ENCODE measurements at regions of chr3 and their contacts with region 1.

Region 1: DNA sequence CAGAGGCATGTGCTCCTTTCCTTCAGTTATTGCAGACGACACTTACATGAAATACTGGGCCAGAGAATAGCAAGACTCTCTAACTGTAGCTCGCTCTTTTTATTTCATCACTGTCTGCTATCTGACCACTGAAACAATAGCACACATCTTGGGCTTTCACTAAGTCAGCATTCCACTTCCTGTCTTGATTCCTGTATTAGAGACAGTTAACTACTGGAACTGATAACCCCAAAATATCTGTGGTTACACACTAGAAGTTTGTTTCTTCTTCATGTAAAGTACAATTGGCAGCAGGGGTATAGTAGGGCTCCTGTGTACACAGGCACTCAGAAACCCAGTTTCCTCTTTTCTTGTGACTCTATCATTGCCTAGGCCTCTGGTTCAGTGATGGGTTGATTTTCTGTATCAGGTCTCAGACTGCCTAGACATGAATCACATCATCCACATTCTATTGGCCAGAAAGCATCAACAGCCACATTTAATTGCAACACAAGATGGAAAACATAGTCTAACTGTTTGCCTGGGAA is 230.2 kb upstream of the CD96 start:
- DNase-seq: peak; percentile 75
- H3K4me3 Mint-ChIP-seq: peak overlapping the region; percentile 40
- H3K27ac Mint-ChIP-seq: peak overlapping the region; percentile 86
- H3K4me1 Mint-ChIP-seq: peaks cover 45% of the 10 kb centered on the region
- H3K27me3 Mint-ChIP-seq: no peaks in the 10 kb centered on the region

Region 2: GRCh38 chr3:111260878-111261277 is 50.9 kb before region 1 on chr3:
- intact Hi-C with region 1: loop called (anchors 2 kb)
- DNase-seq: no peak
- H3K4me3 Mint-ChIP-seq: no peak overlapping the region
- H3K27ac Mint-ChIP-seq: peak overlapping the region; percentile 31
- H3K4me1 Mint-ChIP-seq: peaks cover 19% of the 10 kb centered on the region
- H3K27me3 Mint-ChIP-seq: peaks cover 23% of the 10 kb centered on the region

Region 3: DNA sequence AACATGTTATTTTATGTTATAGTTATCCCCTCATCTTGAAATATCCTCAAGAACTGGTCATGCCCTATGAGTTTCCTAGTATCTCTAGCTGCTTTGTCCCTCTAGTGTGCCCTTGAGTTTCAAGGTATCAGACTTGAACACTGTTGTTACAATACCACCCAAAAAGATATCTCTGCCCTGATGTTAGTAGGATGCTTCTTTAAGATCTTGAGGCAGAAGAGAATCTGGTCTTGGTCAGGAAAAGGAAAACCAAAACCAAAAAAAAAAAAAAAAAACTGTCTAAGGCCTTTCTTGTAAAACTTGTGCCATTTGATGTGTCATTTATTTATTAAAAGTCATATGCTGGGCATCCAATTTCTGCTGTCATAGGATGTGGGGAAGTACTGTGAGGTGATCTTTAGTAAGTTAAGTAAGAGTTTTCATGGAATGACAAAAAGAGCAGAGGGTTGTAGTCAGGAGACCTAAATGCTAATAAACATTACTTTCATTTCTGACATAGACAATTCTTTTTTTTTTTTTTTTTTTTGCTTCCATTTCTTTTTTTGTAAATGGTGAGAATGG is 10.5 kb before region 1 on chr3:
- intact Hi-C with region 1: loop called (anchors 1 kb)
- DNase-seq: no peak
- H3K4me3 Mint-ChIP-seq: peak overlapping the region; percentile 12
- H3K27ac Mint-ChIP-seq: peak overlapping the region; percentile 4
- H3K4me1 Mint-ChIP-seq: peaks cover 46% of the 10 kb centered on the region
- H3K27me3 Mint-ChIP-seq: no peaks in the 10 kb centered on the region

Region 4: GRCh38 chr3:111326144-111326995 is 14.6 kb after region 1 on chr3:
- intact Hi-C with region 1: loop called (anchors 1 kb)
- DNase-seq: no peak
- H3K4me3 Mint-ChIP-seq: peak overlapping the region; percentile 3
- H3K27ac Mint-ChIP-seq: peak overlapping the region; percentile 67
- H3K4me1 Mint-ChIP-seq: peaks cover 29% of the 10 kb centered on the region
- H3K27me3 Mint-ChIP-seq: no peaks in the 10 kb centered on the region

Region 5: GRCh38 chr3:111338059-111338698 is 26.4 kb after region 1 on chr3:
- intact Hi-C with region 1: loop called (anchors 1 kb)
- DNase-seq: peak; percentile 84
- H3K4me3 Mint-ChIP-seq: no peak overlapping the region
- H3K27ac Mint-ChIP-seq: no peak overlapping the region
- H3K4me1 Mint-ChIP-seq: peaks cover 24% of the 10 kb centered on the region
- H3K27me3 Mint-ChIP-seq: peaks cover 2% of the 10 kb centered on the region

Region 6: GRCh38 chr3:111434941-111435622 is 123.3 kb after region 1 on chr3:
- intact Hi-C with region 1: no loop called
- DNase-seq: no peak
- H3K4me3 Mint-ChIP-seq: no peak overlapping the region
- H3K27ac Mint-ChIP-seq: no peak overlapping the region
- H3K4me1 Mint-ChIP-seq: no peaks in the 10 kb centered on the region
- H3K27me3 Mint-ChIP-seq: no peaks in the 10 kb centered on the region

Region 7: GRCh38 chr3:111668912-111669488 is 357.2 kb after region 1 on chr3:
- intact Hi-C with region 1: loop called (anchors 5 kb)
- DNase-seq: peak; percentile 69
- H3K4me3 Mint-ChIP-seq: peak overlapping the region; percentile 22
- H3K27ac Mint-ChIP-seq: peak overlapping the region; percentile 73
- H3K4me1 Mint-ChIP-seq: peaks cover 69% of the 10 kb centered on the region
- H3K27me3 Mint-ChIP-seq: no peaks in the 10 kb centered on the region

Region 8: DNA sequence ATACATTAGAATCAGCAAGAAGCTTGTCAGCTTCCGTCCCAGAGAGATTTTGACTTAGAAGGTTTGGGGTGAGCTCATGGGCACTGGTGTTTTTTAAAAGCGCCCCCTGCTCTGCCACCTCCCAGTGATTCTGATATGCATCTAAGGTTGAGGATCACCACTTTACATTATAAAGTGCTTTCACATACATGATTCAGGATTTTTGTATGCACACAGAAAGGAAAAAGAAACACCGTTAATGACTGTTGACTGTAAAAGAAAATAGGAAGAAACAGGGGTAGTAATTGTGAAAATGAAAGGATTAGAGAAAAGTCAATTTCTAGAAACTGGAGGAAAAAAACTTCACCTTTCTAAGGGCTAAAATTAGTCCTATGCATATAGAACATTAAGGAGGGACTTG is 388.3 kb after region 1 on chr3:
- intact Hi-C with region 1: loop called (anchors 5 kb)
- DNase-seq: peak; percentile 69
- H3K4me3 Mint-ChIP-seq: peak overlapping the region; percentile 71
- H3K27ac Mint-ChIP-seq: peak overlapping the region; percentile 81
- H3K4me1 Mint-ChIP-seq: peaks cover 42% of the 10 kb centered on the region
- H3K27me3 Mint-ChIP-seq: no peaks in the 10 kb centered on the region

Measured in activated CD4-positive, alpha-beta T cell treated with anti-CD3 and anti-CD28 coated beads, Interleukin-2, amount 10 ng/mL, durations not matched to agents 24 days and 14 days (primary cell).